ENCODE measurements at regions of chr6 and their contacts with region 1.

Region 1: DNA sequence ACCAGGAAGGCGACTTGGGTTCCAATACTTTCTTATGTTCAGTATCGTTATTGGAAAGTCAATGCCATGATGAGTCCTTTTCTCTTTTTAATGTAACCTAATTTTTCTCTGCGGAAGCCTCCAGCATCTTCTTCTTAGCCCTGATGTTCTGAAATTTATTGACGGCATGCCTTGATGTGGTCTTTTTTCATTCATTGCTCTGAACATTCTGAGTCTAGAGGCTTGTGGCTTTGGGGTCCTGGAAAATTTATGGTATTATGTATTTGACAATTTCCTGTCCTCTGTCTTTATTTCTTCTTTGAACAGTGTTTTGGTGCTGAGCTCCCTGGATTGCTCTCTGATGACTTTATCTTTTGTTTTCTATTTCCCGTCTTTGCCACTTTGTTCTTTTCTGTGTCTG is 28.7 kb upstream of the MAS1 start:
- DNase-seq: no peak
- ATAC-seq: no peak
- H3K4me3 ChIP-seq: no peak overlapping the region
- H3K27ac ChIP-seq: no peak overlapping the region
- H3K4me1 ChIP-seq: no peaks in the 10 kb centered on the region
- H3K27me3 ChIP-seq: no peaks in the 10 kb centered on the region
- CTCF ChIP-seq: no peak

Region 2: DNA sequence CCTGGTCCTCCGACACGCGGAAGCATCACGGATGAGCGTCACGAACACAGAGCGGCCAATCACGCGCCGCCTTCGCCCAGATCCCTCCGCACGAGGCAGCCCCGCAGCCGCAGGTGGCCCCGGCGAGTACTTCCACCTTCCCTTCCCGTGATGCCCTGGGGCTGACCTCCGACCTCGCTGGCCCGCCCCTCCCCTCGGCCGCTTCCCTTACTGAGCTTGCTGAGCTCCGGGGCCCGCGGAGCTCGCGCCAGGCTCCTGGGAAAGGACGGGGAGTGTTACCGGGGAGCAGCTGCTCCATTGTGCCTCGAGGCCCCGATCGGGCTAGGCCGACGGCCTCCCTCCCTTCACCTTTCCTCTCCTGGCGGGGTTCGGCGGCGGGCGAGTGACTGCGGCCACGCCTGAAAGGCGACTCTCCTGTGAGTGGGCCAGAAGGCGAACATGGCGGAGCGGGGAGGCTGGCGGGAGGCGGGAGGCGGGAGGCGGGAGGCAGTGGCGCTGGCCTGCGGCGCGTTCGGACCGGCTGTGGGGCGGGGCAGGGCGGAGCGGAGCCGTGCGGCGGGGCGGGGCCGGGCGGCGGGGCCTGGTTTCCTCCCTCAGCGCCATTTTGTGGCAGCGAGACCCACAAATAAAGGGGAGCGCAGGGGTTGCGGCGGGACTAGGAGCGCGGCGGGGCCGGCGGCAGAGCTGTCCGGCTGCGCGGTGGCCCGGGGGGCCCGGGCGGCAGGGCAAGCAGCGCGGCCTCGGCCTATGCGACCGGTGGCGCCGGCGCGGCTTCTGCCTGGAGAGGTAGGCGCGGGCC is 135.0 kb before region 1 on chr6 and contains the start of gene WTAP:
- intact Hi-C with region 1: no loop called
- DNase-seq: peak; percentile 96 to 97
- ATAC-seq: peak; percentile 94 to 96 (median 96)
- H3K4me3 ChIP-seq: peak within 1 kb of the TSS; percentile 90
- H3K27ac ChIP-seq: peak within 1 kb of the TSS; percentile 97
- H3K4me1 ChIP-seq: peaks cover 49% of the 10 kb centered on the region
- H3K27me3 ChIP-seq: no peaks in the 10 kb centered on the region
- CTCF ChIP-seq: no peak
- total RNA-seq, gene WTAP: 51.8 to 199 (median 107) TPM

Region 3: DNA sequence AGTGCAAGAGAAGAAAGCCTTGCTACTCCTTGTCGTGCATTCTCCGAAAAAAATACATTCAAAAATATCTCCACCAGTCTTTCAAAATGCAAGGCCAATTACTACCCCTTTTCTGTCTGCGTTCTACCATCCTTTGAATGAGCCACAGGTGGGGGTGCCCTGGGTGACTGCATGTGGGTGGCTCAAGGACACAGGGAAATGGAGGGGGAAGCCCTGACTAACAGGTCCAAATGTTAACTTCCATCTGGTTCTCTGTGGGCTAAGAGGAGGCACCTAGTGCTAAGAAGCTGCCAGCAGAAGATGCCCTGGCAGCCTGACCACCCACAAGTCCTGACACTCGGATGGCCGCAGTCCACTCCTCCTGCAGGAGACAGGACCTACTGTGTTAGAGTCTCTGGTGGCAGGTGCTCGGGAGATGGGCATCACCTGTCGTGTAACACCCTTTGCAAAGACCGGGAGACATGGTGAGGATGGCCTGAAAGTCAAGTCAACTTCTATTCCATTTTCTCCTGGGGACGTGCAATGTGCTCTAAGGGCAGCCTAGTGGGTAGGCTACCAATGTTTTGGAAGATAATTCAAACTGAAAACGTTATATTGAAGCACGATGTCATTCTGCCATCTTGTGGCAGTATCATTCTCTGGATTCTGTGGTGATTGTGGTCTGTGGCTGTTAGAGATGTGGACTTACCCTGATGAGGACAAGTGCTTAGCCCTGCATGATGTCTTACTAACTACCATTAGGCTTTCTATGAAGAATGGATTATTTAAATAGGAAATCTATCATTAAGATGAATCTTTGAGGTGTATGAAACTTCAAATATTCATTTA is 79.4 kb after region 1 on chr6:
- intact Hi-C with region 1: loop called (anchors 2 to 5 kb)
- DNase-seq: no peak
- ATAC-seq: peak; percentile 61 to 83 (median 66)
- H3K4me3 ChIP-seq: no peak overlapping the region
- H3K27ac ChIP-seq: no peak overlapping the region
- H3K4me1 ChIP-seq: peaks cover 13% of the 10 kb centered on the region
- H3K27me3 ChIP-seq: no peaks in the 10 kb centered on the region
- CTCF ChIP-seq: peak; percentile 59

Region 4: DNA sequence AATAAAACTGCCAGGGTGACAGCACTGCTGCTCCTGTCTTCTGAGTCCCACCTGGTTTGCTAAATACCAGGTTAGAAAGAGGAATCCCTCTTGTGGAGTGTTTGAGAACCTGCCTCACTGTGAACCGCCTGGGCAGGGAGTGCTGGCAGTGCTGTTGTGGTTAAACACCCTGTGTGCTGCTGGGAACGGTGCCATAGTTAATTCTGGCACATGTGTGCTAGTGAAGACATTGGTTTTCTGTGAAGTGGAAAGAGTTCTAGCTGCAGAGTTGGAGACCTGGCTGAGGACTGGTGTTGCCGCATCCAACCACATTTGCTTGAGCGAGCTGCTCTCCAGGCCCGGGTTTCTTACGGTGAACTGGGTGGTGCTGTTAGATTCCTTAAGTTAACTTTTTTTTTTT is 179.5 kb after region 1 on chr6:
- intact Hi-C with region 1: loop called in 1 of 2 experiments (anchors 10 kb)
- DNase-seq: peak; percentile 63 to 80
- ATAC-seq: peak; percentile 82 to 91 (median 88)
- H3K4me3 ChIP-seq: no peak overlapping the region
- H3K27ac ChIP-seq: peak overlapping the region; percentile 59
- H3K4me1 ChIP-seq: peaks cover 25% of the 10 kb centered on the region
- H3K27me3 ChIP-seq: no peaks in the 10 kb centered on the region
- CTCF ChIP-seq: peak; percentile 49

Region 5: DNA sequence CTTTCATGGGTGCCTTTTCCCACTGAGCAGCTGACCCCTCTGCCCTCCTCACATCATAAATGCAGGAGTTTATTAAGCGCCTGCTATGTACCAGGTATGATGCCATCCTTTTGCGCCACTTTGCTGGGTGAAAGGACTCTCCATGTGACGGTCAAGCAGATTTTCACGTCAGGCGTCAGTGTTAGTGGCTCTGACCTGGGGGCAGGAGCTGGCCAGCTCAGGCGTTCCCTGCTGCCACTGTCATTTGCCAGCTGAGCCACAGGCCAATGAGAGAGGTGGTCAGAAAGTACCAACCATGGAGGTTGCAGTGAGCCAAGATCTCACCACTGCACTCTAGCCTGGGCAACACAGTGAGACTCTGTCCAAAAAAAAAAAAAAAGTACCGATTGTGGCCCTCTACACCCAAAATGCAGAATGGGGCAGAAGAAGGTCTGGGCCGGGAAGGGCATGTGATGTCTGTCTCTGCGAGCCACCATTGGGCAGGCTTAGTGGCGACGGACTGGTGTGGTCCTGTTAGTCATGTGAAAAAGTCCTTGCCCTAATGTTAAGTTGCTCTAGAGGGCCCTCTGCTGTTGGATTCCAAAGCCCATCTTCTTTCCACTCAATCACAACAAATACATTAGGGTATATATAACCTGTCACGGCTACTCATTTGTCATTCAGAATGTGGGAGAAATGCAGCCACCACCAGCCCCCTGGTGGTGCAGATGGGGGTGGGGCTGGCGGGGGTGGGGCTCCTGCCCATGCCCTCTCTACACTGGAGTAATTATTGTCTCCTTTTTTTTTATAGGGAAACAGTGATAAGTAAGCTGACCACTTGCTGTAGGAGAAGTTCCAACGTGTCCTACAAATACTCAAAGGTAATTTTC is 241.1 kb after region 1 on chr6:
- intact Hi-C with region 1: loop called in 1 of 2 experiments (anchors 10 kb)
- DNase-seq: no peak
- ATAC-seq: peak; percentile 21 to 63 (median 46)
- H3K4me3 ChIP-seq: no peak overlapping the region
- H3K27ac ChIP-seq: no peak overlapping the region
- H3K4me1 ChIP-seq: no peaks in the 10 kb centered on the region
- H3K27me3 ChIP-seq: no peaks in the 10 kb centered on the region
- CTCF ChIP-seq: peak; percentile 32

Region 6: DNA sequence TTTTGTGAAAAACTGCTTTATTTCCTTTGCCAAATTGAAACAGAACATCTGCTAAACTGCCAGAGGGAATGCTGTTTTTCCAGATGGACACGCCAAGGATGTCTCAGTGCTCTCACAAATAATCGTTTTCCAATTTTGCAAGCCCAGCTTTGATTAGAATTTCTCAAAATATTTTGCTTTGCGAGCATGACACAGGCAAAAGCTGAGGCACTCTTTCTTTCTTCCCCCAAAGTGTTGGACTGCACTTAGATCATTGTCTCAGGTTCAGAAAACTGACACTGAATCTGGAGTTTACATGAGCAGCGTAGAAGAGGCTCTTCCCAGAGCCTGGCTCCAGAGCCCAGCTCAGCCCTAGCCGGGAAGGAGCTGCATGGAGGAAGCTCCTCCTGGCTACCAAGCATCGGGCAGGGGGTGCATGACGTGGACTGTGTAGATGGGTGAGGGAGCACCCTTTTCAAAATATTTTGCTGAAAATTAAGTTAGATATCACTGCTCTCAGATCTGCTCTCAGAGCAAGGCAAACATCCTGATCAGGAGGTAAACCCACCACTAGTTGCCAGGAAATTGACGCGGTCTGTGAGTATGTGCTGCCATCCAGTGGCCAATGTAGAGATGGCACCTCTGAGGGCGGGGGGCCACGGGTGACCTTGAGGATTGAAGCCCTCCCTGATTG is 593.6 kb after region 1 on chr6:
- intact Hi-C with region 1: loop called (anchors 5 to 10 kb)
- DNase-seq: peak; percentile 48 to 64
- ATAC-seq: peak; percentile 74 to 90 (median 80)
- H3K4me3 ChIP-seq: peak overlapping the region; percentile 43
- H3K27ac ChIP-seq: no peak overlapping the region
- H3K4me1 ChIP-seq: no peaks in the 10 kb centered on the region
- H3K27me3 ChIP-seq: no peaks in the 10 kb centered on the region
- CTCF ChIP-seq: peak; percentile 95

Region 7: DNA sequence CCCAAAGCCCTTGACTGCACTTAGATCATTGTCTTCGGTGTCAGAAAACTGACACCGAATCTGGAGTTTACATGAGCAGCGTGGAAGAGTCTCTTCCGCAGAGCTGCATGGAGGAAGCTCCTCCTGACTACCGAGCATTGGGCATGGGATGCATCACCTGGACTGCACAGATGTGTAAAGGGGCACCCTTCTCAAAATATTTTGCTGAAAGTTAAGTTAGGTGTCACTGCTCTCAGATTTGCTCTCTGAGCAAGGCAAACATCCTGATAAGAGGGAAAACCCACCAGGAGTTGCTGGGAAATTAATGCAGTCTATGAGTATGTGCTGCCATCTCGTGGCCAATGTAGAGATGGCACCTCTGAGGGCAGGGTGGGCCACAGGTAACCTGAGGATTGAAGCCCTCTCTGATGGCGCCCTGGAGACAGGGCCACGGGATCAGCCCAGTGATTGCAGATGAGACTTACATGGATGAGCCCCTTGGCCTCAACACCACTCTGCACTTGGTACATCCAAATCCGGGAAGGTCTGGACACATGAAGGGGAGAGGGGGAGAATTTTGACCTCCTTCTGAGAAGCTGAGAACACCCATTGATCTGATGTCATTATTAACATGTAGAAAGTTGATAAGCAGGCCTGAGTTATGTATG is 672.1 kb after region 1 on chr6:
- intact Hi-C with region 1: loop called in 1 of 2 experiments (anchors 10 kb)
- DNase-seq: peak; percentile 39 to 63
- ATAC-seq: peak; percentile 62 to 82 (median 78)
- H3K4me3 ChIP-seq: peak overlapping the region; percentile 13
- H3K27ac ChIP-seq: no peak overlapping the region
- H3K4me1 ChIP-seq: peaks cover 4% of the 10 kb centered on the region
- H3K27me3 ChIP-seq: no peaks in the 10 kb centered on the region
- CTCF ChIP-seq: peak; percentile 94